GM18951 (cell line): ENCODE measurements at regions of chr4 and their contacts with region 1.

Region 1: DNA sequence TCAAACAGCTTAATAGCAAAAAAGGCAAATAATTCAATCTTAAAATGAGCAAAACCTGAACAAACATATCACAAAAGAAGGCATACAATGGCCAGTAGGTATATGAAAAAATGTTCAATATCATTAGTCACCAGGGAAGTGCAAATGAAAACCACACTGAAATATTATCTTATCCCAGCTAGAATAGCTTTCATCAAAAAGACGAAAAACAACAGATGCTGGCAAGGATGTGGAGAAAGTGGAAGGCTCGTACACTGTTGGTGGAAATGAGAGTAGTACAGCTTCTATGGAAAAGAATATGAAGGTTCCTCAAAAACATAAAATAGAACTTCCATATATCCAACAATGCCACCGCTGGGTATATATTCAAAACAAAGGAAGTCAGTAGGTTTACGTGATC is 29.3 kb upstream of the ANXA10 start:
- POLR2A ChIP-seq: no peak

Region 2: DNA sequence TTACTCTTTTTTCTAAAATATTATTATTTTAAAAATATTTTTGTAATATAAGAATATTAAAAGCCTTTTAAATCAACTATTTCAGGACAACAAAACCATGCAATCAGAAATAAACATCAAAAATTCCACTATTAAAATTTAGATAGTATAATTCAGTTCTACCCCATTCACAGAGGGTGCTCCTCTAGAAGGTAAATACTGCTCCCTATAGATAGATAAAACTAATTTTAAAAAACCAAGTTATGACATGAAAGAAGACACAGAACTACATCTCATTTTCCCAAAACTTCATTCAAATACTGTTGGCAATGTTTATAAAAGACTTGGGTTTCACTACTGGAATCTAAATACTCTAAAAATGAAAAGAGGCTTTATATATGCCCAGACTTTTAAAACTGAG is 1048.1 kb before region 1 on chr4:
- in situ Hi-C with region 1: loop called (anchors 10 kb)
- POLR2A ChIP-seq: no peak

Region 3: GRCh38 chr4:167713756-167714155 is 349.3 kb before region 1 on chr4:
- in situ Hi-C with region 1: no loop called
- POLR2A ChIP-seq: no peak

Region 4: DNA sequence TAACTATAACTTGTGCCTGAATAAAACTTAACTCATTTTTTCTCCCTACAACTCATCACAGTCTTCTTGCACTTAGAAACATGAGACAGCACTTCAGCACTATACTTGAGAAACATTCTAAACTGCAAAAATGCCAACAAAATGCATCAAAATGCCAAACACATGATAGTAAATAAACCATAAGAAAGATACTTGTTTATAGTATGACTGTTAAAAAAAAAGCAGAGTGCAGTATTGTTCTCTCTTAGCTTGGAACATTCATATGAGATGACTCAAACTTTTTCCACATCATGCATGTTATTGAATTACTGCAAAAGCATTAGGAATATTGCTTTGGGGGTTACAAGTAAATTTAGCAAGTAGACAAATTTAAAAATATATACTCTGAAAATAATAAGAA is 106.4 kb before region 1 on chr4:
- in situ Hi-C with region 1: no loop called
- POLR2A ChIP-seq: no peak